CD14-positive monocyte (primary cell): ENCODE measurements at regions of chr11 and their contacts with region 1.

Region 1: GRCh38 chr11:118834427-118835028 is 43.6 kb upstream of the DDX6 start:
- DNase-seq: peak; percentile 24 to 50 (median 42)
- H3K4me3 ChIP-seq: peak overlapping the region in 1 of 3 experiments; percentile 46
- H3K4me3 Mint-ChIP-seq: peak overlapping the region; percentile 58 to 70
- H3K27ac ChIP-seq: peak overlapping the region in 1 of 2 donors; percentile 59
- H3K27ac Mint-ChIP-seq: peak overlapping the region in 6 of 7 donors; percentile 58 to 84 (median 68)
- H3K4me1 ChIP-seq: peaks cover 19 to 22% of the 10 kb centered on the region in 2 donors
- H3K4me1 Mint-ChIP-seq: peaks cover 26% of the 10 kb centered on the region
- H3K27me3 ChIP-seq: no peaks in the 10 kb centered on the region
- H3K27me3 Mint-ChIP-seq: peaks cover 0 to 3% (median 0%) of the 10 kb centered on the region in 3 donors
- CTCF ChIP-seq: no peak

Region 2: GRCh38 chr11:118771547-118772288 is 62.8 kb before region 1 on chr11:
- intact Hi-C with region 1: no loop called
- DNase-seq: peak; percentile 29 to 60 (median 35)
- H3K4me3 ChIP-seq: peak overlapping the region; percentile 25 to 69 (median 57)
- H3K4me3 Mint-ChIP-seq: peak overlapping the region; percentile 32 to 86
- H3K27ac ChIP-seq: peak overlapping the region in 1 of 2 donors; percentile 77
- H3K27ac Mint-ChIP-seq: peak overlapping the region; percentile 85 to 93 (median 90)
- H3K4me1 ChIP-seq: peaks cover 51 to 53% of the 10 kb centered on the region in 2 donors
- H3K4me1 Mint-ChIP-seq: peaks cover 56% of the 10 kb centered on the region
- H3K27me3 ChIP-seq: no peaks in the 10 kb centered on the region
- H3K27me3 Mint-ChIP-seq: no peaks in the 10 kb centered on the region
- CTCF ChIP-seq: no peak

Region 3: GRCh38 chr11:118819334-118820070 is 15.0 kb before region 1 on chr11:
- intact Hi-C with region 1: loop called in 1 of 2 experiments (anchors 1 kb)
- DNase-seq: no peak
- H3K4me3 ChIP-seq: no peak overlapping the region
- H3K4me3 Mint-ChIP-seq: no peak overlapping the region
- H3K27ac ChIP-seq: no peak overlapping the region
- H3K27ac Mint-ChIP-seq: peak overlapping the region in 1 of 7 donors; percentile 21
- H3K4me1 ChIP-seq: no peaks in the 10 kb centered on the region
- H3K4me1 Mint-ChIP-seq: no peaks in the 10 kb centered on the region
- H3K27me3 ChIP-seq: no peaks in the 10 kb centered on the region
- H3K27me3 Mint-ChIP-seq: peaks cover 0 to 3% (median 3%) of the 10 kb centered on the region in 3 donors
- CTCF ChIP-seq: no peak